ENCODE measurements at regions of chr6 and their contacts with region 1.

Region 1: GRCh38 chr6:151323791-151324487 is 67.4 kb downstream of the ZBTB2 start:
- DNase-seq: peak; percentile 24 to 82 (median 64)
- ATAC-seq: peak; percentile 65 to 81 (median 80)
- H3K4me3 ChIP-seq: no peak overlapping the region
- H3K4me3 Mint-ChIP-seq: peak overlapping the region in 2 of 3 donors; percentile 28 to 81
- H3K27ac ChIP-seq: no peak overlapping the region
- H3K27ac Mint-ChIP-seq: no peak overlapping the region
- H3K4me1 ChIP-seq: peaks cover 2 to 19% of the 10 kb centered on the region in 2 experiments
- H3K4me1 Mint-ChIP-seq: peaks cover 19 to 28% (median 25%) of the 10 kb centered on the region in 3 donors
- H3K27me3 ChIP-seq: peaks cover 2 to 39% of the 10 kb centered on the region in 2 experiments
- H3K27me3 Mint-ChIP-seq: peaks cover 46 to 56% of the 10 kb centered on the region in 2 donors

Region 2: GRCh38 chr6:151335930-151336329 is 12.0 kb after region 1 on chr6:
- CTCF ChIA-PET with region 1: interaction called, 4 to 45 read pairs
- POLR2A ChIA-PET with region 1: no interaction called
- DNase-seq: no peak
- ATAC-seq: no peak
- H3K4me3 ChIP-seq: no peak overlapping the region
- H3K4me3 Mint-ChIP-seq: no peak overlapping the region
- H3K27ac ChIP-seq: no peak overlapping the region
- H3K27ac Mint-ChIP-seq: no peak overlapping the region
- H3K4me1 ChIP-seq: peaks cover 0 to 3% of the 10 kb centered on the region in 2 experiments
- H3K4me1 Mint-ChIP-seq: peaks cover 0 to 3% (median 3%) of the 10 kb centered on the region in 3 donors
- H3K27me3 ChIP-seq: peaks cover 0 to 5% of the 10 kb centered on the region in 2 experiments
- H3K27me3 Mint-ChIP-seq: peaks cover 1 to 5% of the 10 kb centered on the region in 2 donors

Region 3: GRCh38 chr6:151652290-151652689 is 328.4 kb after region 1 on chr6:
- CTCF ChIA-PET with region 1: no interaction called
- POLR2A ChIA-PET with region 1: no interaction called
- DNase-seq: no peak
- ATAC-seq: no peak
- H3K4me3 ChIP-seq: no peak overlapping the region
- H3K4me3 Mint-ChIP-seq: no peak overlapping the region
- H3K27ac ChIP-seq: no peak overlapping the region
- H3K27ac Mint-ChIP-seq: no peak overlapping the region
- H3K4me1 ChIP-seq: no peaks in the 10 kb centered on the region
- H3K4me1 Mint-ChIP-seq: no peaks in the 10 kb centered on the region
- H3K27me3 ChIP-seq: peaks cover 0 to 17% of the 10 kb centered on the region in 2 experiments
- H3K27me3 Mint-ChIP-seq: peaks cover 12 to 20% of the 10 kb centered on the region in 2 donors